Naive thymus-derived CD4-positive, alpha-beta T cell (primary cell): ENCODE measurements at regions of chr22 and their contacts with region 1.

Region 1: GRCh38 chr22:26483439-26484359 is at the starts of genes HPS4 and SRRD:
- DNase-seq: peak; percentile 90 to 99 (median 94)
- ATAC-seq: peak; percentile 93
- H3K4me3 ChIP-seq: peak within 1 kb of the TSS; percentile 61
- H3K4me3 Mint-ChIP-seq: peak within 1 kb of the TSS; percentile 75 to 97 (median 93)
- H3K27ac ChIP-seq: peak within 1 kb of the TSS; percentile 95
- H3K27ac Mint-ChIP-seq: peak within 1 kb of the TSS; percentile 93 to 99 (median 98)
- H3K4me1 ChIP-seq: peaks cover 17 to 48% of the 10 kb centered on the region in 2 donors
- H3K4me1 Mint-ChIP-seq: peaks cover 47 to 77% (median 68%) of the 10 kb centered on the region in 7 donors
- H3K27me3 ChIP-seq: no peaks in the 10 kb centered on the region
- H3K27me3 Mint-ChIP-seq: no peaks in the 10 kb centered on the region
- total RNA-seq, gene HPS4: 45.5 to 64.3 (median 59.1) TPM
- total RNA-seq, gene SRRD: 18.9 to 22.8 (median 20.1) TPM

Region 2: GRCh38 chr22:26364066-26365015 is 119.4 kb before region 1 on chr22:
- CTCF ChIA-PET with region 1: no interaction called
- POLR2A ChIA-PET with region 1: no interaction called
- intact Hi-C with region 1: loop called in 1 of 2 experiments (anchors 5 kb)
- DNase-seq: peak in 8 of 9 donors; percentile 33 to 56 (median 47)
- ATAC-seq: peak; percentile 84
- H3K4me3 ChIP-seq: no peak overlapping the region
- H3K4me3 Mint-ChIP-seq: no peak overlapping the region
- H3K27ac ChIP-seq: no peak overlapping the region
- H3K27ac Mint-ChIP-seq: no peak overlapping the region
- H3K4me1 ChIP-seq: no peaks in the 10 kb centered on the region
- H3K4me1 Mint-ChIP-seq: peaks cover 4 to 13% (median 6%) of the 10 kb centered on the region in 7 donors
- H3K27me3 ChIP-seq: peaks cover 0 to 3% of the 10 kb centered on the region in 2 donors
- H3K27me3 Mint-ChIP-seq: peaks cover 7 to 18% (median 12%) of the 10 kb centered on the region in 5 donors

Region 3: GRCh38 chr22:26502688-26503561 is 19.2 kb after region 1 on chr22:
- CTCF ChIA-PET with region 1: interaction called, 3 read pairs
- POLR2A ChIA-PET with region 1: interaction called, 30 read pairs
- intact Hi-C with region 1: no loop called
- DNase-seq: peak; percentile 15 to 60 (median 45)
- ATAC-seq: peak; percentile 95
- H3K4me3 ChIP-seq: no peak overlapping the region
- H3K4me3 Mint-ChIP-seq: peak overlapping the region; percentile 28 to 76 (median 58)
- H3K27ac ChIP-seq: peak overlapping the region; percentile 32
- H3K27ac Mint-ChIP-seq: peak overlapping the region; percentile 28 to 87 (median 65)
- H3K4me1 ChIP-seq: peaks cover 13 to 20% of the 10 kb centered on the region in 2 donors
- H3K4me1 Mint-ChIP-seq: peaks cover 16 to 30% (median 25%) of the 10 kb centered on the region in 7 donors
- H3K27me3 ChIP-seq: no peaks in the 10 kb centered on the region
- H3K27me3 Mint-ChIP-seq: no peaks in the 10 kb centered on the region

Region 4: GRCh38 chr22:26511857-26512793 is 28.4 kb after region 1 on chr22 and contains the start of gene TFIP11:
- CTCF ChIA-PET with region 1: interaction called, 4 read pairs
- POLR2A ChIA-PET with region 1: interaction called, 47 read pairs
- intact Hi-C with region 1: loop called (anchors 1 kb)
- DNase-seq: peak; percentile 80 to 93 (median 84)
- ATAC-seq: peak; percentile 97
- H3K4me3 ChIP-seq: peak within 1 kb of the TSS; percentile 89
- H3K4me3 Mint-ChIP-seq: peak within 1 kb of the TSS; percentile 96 to 100 (median 99)
- H3K27ac ChIP-seq: peak within 1 kb of the TSS; percentile 96
- H3K27ac Mint-ChIP-seq: peak within 1 kb of the TSS; percentile 96 to 100 (median 99)
- H3K4me1 ChIP-seq: peaks cover 9 to 23% of the 10 kb centered on the region in 2 donors
- H3K4me1 Mint-ChIP-seq: peaks cover 29 to 52% (median 50%) of the 10 kb centered on the region in 7 donors
- H3K27me3 ChIP-seq: no peaks in the 10 kb centered on the region
- H3K27me3 Mint-ChIP-seq: no peaks in the 10 kb centered on the region
- total RNA-seq, gene TFIP11: 63.6 to 107 (median 72.9) TPM

Region 5: GRCh38 chr22:26610072-26610958 is 126.6 kb after region 1 on chr22:
- CTCF ChIA-PET with region 1: no interaction called
- POLR2A ChIA-PET with region 1: no interaction called
- intact Hi-C with region 1: no loop called
- DNase-seq: peak in 1 of 9 donors; percentile 47
- ATAC-seq: peak; percentile 37
- H3K4me3 ChIP-seq: no peak overlapping the region
- H3K4me3 Mint-ChIP-seq: peak overlapping the region in 4 of 10 donors; percentile 29 to 74 (median 40)
- H3K27ac ChIP-seq: no peak overlapping the region
- H3K27ac Mint-ChIP-seq: peak overlapping the region in 1 of 9 donors; percentile 88
- H3K4me1 ChIP-seq: peaks cover 0 to 20% of the 10 kb centered on the region in 2 donors
- H3K4me1 Mint-ChIP-seq: peaks cover 0 to 29% (median 0%) of the 10 kb centered on the region in 7 donors
- H3K27me3 ChIP-seq: no peaks in the 10 kb centered on the region
- H3K27me3 Mint-ChIP-seq: peaks cover 0 to 30% (median 0%) of the 10 kb centered on the region in 5 donors

Region 6: DNA sequence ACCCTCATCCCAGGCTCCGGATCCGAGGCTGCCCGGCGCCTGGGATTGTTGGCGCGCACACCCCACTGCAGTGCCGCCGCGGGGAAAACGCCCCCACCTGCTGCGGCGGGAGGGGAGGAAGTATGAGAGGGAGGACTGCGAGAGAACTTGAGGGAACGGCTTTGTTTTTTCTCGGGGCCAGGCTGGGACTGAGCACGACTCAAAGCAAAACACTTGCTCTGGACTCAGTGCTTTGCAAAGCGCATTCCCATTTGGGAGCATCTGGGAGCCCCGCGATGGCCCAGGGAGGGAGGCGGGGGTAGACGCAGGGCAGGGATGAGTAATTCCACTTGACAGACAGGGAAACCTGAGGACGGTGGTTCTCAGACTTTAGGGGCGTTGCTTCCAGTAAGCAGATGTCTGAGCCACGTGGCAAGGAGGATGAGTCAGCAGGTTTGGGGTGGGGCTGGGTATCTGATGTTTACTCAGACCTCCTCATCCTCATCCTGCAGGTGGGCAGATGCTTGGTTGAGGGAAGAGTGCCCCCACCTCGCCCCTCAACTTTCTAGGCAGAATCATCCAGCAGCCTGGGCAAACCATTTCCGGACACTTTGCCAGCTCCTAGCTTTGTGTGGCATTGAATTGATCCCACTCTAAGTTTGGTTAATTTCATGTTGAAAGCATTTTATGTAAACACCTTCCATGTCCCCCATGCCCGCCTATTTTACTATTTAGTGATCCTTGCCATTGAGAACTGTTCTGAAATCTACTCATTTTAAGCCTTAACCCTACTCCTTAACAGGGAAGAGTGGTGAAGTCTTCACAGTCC is 175.2 kb after region 1 on chr22:
- CTCF ChIA-PET with region 1: no interaction called
- POLR2A ChIA-PET with region 1: no interaction called
- intact Hi-C with region 1: loop called in 1 of 2 experiments (anchors 5 kb)
- DNase-seq: peak in 6 of 9 donors; percentile 32 to 77 (median 40)
- ATAC-seq: peak; percentile 75
- H3K4me3 ChIP-seq: peak overlapping the region; percentile 87
- H3K4me3 Mint-ChIP-seq: peak overlapping the region; percentile 80 to 98 (median 88)
- H3K27ac ChIP-seq: no peak overlapping the region
- H3K27ac Mint-ChIP-seq: peak overlapping the region in 7 of 9 donors; percentile 47 to 91 (median 74)
- H3K4me1 ChIP-seq: peaks cover 15 to 20% of the 10 kb centered on the region in 2 donors
- H3K4me1 Mint-ChIP-seq: peaks cover 14 to 54% (median 21%) of the 10 kb centered on the region in 7 donors
- H3K27me3 ChIP-seq: no peaks in the 10 kb centered on the region
- H3K27me3 Mint-ChIP-seq: peaks cover 0 to 10% (median 0%) of the 10 kb centered on the region in 5 donors